ENCODE measurements at regions of chr10 and their contacts with region 1.

Region 1: GRCh38 chr10:132961787-132962622 is 19.6 kb upstream of the CFAP46 start:
- DNase-seq: peak; percentile 90
- ATAC-seq: peak; percentile 82
- H3K4me3 Mint-ChIP-seq: peak overlapping the region; percentile 73
- H3K27ac Mint-ChIP-seq: peak overlapping the region; percentile 71
- H3K4me1 Mint-ChIP-seq: peaks cover 26% of the 10 kb centered on the region
- H3K27me3 Mint-ChIP-seq: peaks cover 26% of the 10 kb centered on the region

Region 2: GRCh38 chr10:132209130-132209529 is 752.9 kb before region 1 on chr10:
- CTCF ChIA-PET with region 1: no interaction called
- POLR2A ChIA-PET with region 1: no interaction called
- intact Hi-C with region 1: no loop called
- DNase-seq: no peak
- ATAC-seq: no peak
- H3K4me3 Mint-ChIP-seq: no peak overlapping the region
- H3K27ac Mint-ChIP-seq: no peak overlapping the region
- H3K4me1 Mint-ChIP-seq: no peaks in the 10 kb centered on the region
- H3K27me3 Mint-ChIP-seq: no peaks in the 10 kb centered on the region

Region 3: DNA sequence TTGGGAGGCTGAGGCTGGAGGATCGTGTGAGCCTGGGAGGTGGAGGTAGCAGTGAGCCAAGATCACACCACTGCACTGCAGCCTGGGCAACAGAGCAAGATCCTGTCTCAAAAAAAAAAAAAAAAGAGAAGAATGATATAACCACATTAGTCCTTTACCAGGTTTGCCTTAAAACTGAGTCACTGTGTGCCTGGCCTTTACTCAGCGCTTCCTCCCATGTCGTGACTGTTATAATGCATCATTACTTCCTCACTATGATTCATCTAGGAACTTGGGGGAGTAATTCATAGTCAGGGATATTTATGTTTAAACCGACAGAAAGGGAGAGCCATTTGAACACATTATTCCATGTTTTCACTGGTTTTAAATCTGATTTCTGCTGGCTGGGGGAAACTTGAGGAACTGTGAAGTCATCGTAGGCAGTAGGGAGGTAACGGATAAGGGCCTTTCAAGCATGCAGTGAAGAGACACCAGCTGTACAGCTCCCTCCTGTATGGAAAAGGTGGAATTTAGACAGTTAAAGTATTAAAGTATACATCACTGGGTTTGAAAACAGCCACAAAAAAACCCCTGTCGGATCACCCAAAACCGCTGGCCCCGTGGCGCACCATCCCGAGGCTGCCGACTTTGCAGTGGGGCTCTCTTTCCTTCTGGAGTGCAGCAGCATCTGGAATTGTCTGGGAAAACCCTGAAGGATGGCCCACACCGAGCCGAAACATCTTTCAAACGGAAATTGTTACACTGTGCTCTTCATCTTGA is 295.9 kb before region 1 on chr10:
- CTCF ChIA-PET with region 1: no interaction called
- POLR2A ChIA-PET with region 1: no interaction called
- intact Hi-C with region 1: loop called in 1 of 2 experiments (anchors 1 kb)
- DNase-seq: peak; percentile 59
- ATAC-seq: peak; percentile 98
- H3K4me3 Mint-ChIP-seq: no peak overlapping the region
- H3K27ac Mint-ChIP-seq: no peak overlapping the region
- H3K4me1 Mint-ChIP-seq: peaks cover 12% of the 10 kb centered on the region
- H3K27me3 Mint-ChIP-seq: no peaks in the 10 kb centered on the region

Region 4: GRCh38 chr10:132939957-132940790 is 21.8 kb before region 1 on chr10:
- CTCF ChIA-PET with region 1: interaction called, 5 read pairs
- POLR2A ChIA-PET with region 1: no interaction called
- intact Hi-C with region 1: loop called in 1 of 2 experiments (anchors 1 kb)
- DNase-seq: peak; percentile 81
- ATAC-seq: peak; percentile 74
- H3K4me3 Mint-ChIP-seq: no peak overlapping the region
- H3K27ac Mint-ChIP-seq: no peak overlapping the region
- H3K4me1 Mint-ChIP-seq: peaks cover 5% of the 10 kb centered on the region
- H3K27me3 Mint-ChIP-seq: peaks cover 48% of the 10 kb centered on the region

Region 5: GRCh38 chr10:133357285-133358151 is 395.5 kb after region 1 on chr10 and contains the start of gene FUOM:
- CTCF ChIA-PET with region 1: no interaction called
- POLR2A ChIA-PET with region 1: no interaction called
- intact Hi-C with region 1: no loop called
- DNase-seq: peak; percentile 87
- ATAC-seq: peak; percentile 92
- H3K4me3 Mint-ChIP-seq: peak within 1 kb of the TSS; percentile 77
- H3K27ac Mint-ChIP-seq: peak within 1 kb of the TSS; percentile 60
- H3K4me1 Mint-ChIP-seq: peaks cover 7% of the 10 kb centered on the region
- H3K27me3 Mint-ChIP-seq: no peaks in the 10 kb centered on the region
- total RNA-seq, gene FUOM: 28.3 to 37.0 TPM

Region 6: DNA sequence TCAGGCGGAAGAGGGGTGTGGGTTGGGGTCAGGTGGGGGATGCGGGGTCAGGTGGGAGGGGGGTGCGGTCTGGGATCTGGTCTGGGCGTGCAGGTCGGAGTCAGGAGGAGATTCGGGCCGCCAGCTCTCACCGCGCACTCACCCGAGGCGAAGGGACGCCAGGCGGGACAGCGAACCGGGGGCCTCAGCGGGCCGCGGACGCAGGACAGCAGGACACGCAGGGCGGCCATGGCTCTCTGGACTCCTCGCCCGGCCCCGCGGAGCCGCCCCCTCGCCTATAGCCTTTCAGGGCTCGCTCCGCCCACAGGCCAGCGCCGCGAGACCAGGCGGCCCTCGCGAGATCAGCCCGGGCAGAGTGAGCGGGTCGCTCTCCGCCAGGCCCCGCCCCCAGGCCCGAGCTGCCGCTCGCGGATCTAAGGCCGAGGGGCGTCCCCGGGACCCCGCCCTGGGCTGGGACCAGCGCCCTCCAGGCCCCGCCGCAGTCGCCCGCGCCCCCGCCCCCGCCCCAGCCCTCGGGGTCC is 411.2 kb after region 1 on chr10 and contains the start of gene ECHS1:
- CTCF ChIA-PET with region 1: no interaction called
- POLR2A ChIA-PET with region 1: no interaction called
- intact Hi-C with region 1: loop called in 1 of 2 experiments (anchors 1 kb)
- DNase-seq: peak; percentile 97
- ATAC-seq: peak; percentile 100
- H3K4me3 Mint-ChIP-seq: peak within 1 kb of the TSS; percentile 73
- H3K27ac Mint-ChIP-seq: peak within 1 kb of the TSS; percentile 79
- H3K4me1 Mint-ChIP-seq: peaks cover 11% of the 10 kb centered on the region
- H3K27me3 Mint-ChIP-seq: no peaks in the 10 kb centered on the region
- total RNA-seq, gene ECHS1: 42.0 to 56.7 TPM

Measured in activated CD4-positive, alpha-beta T cell treated with anti-CD3 and anti-CD28 coated beads for 36 hours (primary cell).